ENCODE measurements at regions of chr3 and their contacts with region 1.

Region 1: GRCh38 chr3:183099026-183099837 is at the start of gene MCCC1:
- DNase-seq: peak; percentile 100
- H3K4me3 Mint-ChIP-seq: peak within 1 kb of the TSS; percentile 98
- H3K27ac Mint-ChIP-seq: peak within 1 kb of the TSS; percentile 96
- H3K4me1 Mint-ChIP-seq: peaks cover 52% of the 10 kb centered on the region
- H3K27me3 Mint-ChIP-seq: no peaks in the 10 kb centered on the region
- CTCF ChIP-seq: no peak
- total RNA-seq, gene MCCC1: 74.7 and 87.5 TPM in 2 replicates

Region 2: DNA sequence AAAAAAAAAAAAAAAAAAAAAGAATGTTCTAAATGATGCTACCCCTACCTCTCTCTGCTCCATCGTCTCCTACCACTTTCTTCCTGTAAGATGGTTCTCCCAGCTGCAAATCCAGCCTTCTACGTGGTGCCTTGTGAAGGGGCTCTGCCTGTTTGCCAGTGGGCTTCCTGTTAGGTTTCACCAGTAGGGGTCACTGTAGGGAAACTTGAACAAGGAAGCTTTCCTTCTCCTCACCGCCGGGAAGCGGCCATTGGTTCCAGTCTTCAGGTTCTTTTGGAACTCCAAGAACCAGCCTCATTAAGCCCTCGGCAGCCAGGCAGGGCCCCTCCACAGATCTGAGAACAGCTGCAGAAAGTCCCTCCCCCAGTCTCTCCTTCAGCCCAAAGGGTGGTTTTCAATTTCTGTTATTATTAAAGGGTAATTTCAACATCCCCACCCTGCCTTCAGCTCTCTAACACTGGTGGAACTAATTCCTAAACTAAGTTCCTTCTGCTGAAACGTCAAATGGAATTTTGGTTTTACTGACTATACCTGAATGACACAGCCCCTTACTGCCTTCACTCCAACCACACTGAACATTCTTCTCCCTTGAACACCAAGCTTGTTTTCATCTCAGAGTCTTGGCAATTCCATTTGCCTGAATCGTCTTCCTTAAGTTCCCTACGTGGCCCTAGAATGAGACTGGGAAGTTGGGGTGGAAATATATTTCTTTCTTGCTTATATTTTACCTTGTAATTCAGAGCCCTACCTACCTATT is 13.4 kb before region 1 on chr3:
- CTCF ChIA-PET with region 1: interaction called, 14 read pairs
- intact Hi-C with region 1: no loop called
- DNase-seq: peak; percentile 45
- H3K4me3 Mint-ChIP-seq: no peak overlapping the region
- H3K27ac Mint-ChIP-seq: no peak overlapping the region
- H3K4me1 Mint-ChIP-seq: no peaks in the 10 kb centered on the region
- H3K27me3 Mint-ChIP-seq: no peaks in the 10 kb centered on the region
- CTCF ChIP-seq: peak; percentile 52

Region 3: GRCh38 chr3:183201960-183202722 is 102.9 kb after region 1 on chr3:
- CTCF ChIA-PET with region 1: no interaction called
- intact Hi-C with region 1: no loop called
- DNase-seq: no peak
- H3K4me3 Mint-ChIP-seq: no peak overlapping the region
- H3K27ac Mint-ChIP-seq: no peak overlapping the region
- H3K4me1 Mint-ChIP-seq: no peaks in the 10 kb centered on the region
- H3K27me3 Mint-ChIP-seq: no peaks in the 10 kb centered on the region
- CTCF ChIP-seq: no peak

Measured in Calu3 (cell line).